ENCODE measurements at regions of chr4 and their contacts with region 1.

Region 1: DNA sequence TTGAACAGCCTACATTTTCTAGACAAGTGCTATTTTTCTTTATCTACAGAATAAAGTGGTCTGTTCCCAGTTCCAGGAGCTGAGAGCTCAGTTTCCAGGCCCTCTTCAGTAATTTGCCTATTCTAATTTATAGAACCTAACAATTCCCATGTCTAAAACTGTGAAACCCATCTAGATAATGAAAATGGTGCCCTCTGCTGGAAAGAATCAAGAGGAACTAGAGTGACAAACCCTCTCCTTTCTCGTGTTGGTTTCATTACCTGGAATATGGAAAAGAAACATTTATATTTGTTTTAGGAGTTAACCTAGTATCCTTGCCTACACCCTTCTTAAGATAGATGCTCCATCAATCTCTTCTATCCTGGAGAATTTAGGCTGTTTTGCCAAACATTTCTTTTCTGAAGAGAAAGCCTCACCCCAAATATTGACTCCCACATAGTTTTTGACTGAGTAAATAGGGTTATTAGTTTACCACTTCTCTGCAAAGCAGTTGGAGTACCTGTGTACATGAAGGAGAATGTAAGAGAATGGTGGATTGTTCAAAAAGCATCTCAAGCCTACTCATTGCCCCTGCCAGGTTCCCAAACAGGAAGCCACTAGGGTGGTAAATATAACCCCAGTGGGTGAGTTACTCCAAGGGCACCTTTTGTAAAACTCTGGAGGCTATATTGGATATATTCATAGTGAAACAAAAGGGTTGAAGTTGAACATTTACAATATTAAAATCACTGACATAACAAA is 121.6 kb downstream of the RASL11B start:
- DNase-seq: peak in 1 of 2 experiments; percentile 64
- H3K4me3 ChIP-seq: no peak overlapping the region
- H3K4me3 Mint-ChIP-seq: no peak overlapping the region
- H3K27ac Mint-ChIP-seq: no peak overlapping the region
- H3K4me1 ChIP-seq: peaks cover 7% of the 10 kb centered on the region
- H3K4me1 Mint-ChIP-seq: no peaks in the 10 kb centered on the region
- H3K27me3 ChIP-seq: no peaks in the 10 kb centered on the region
- H3K27me3 Mint-ChIP-seq: no peaks in the 10 kb centered on the region
- CTCF ChIP-seq: peak; percentile 58 to 66

Region 2: GRCh38 chr4:52234561-52235440 is 748.9 kb before region 1 on chr4:
- CTCF ChIA-PET with region 1: no interaction called
- POLR2A ChIA-PET with region 1: no interaction called
- intact Hi-C with region 1: loop called (anchors 1 kb)
- DNase-seq: peak in 1 of 2 experiments; percentile 34
- H3K4me3 ChIP-seq: no peak overlapping the region
- H3K4me3 Mint-ChIP-seq: no peak overlapping the region
- H3K27ac Mint-ChIP-seq: no peak overlapping the region
- H3K4me1 ChIP-seq: no peaks in the 10 kb centered on the region
- H3K4me1 Mint-ChIP-seq: no peaks in the 10 kb centered on the region
- H3K27me3 ChIP-seq: no peaks in the 10 kb centered on the region
- H3K27me3 Mint-ChIP-seq: peaks cover 8% of the 10 kb centered on the region
- CTCF ChIP-seq: peak; percentile 43 to 57

Region 3: DNA sequence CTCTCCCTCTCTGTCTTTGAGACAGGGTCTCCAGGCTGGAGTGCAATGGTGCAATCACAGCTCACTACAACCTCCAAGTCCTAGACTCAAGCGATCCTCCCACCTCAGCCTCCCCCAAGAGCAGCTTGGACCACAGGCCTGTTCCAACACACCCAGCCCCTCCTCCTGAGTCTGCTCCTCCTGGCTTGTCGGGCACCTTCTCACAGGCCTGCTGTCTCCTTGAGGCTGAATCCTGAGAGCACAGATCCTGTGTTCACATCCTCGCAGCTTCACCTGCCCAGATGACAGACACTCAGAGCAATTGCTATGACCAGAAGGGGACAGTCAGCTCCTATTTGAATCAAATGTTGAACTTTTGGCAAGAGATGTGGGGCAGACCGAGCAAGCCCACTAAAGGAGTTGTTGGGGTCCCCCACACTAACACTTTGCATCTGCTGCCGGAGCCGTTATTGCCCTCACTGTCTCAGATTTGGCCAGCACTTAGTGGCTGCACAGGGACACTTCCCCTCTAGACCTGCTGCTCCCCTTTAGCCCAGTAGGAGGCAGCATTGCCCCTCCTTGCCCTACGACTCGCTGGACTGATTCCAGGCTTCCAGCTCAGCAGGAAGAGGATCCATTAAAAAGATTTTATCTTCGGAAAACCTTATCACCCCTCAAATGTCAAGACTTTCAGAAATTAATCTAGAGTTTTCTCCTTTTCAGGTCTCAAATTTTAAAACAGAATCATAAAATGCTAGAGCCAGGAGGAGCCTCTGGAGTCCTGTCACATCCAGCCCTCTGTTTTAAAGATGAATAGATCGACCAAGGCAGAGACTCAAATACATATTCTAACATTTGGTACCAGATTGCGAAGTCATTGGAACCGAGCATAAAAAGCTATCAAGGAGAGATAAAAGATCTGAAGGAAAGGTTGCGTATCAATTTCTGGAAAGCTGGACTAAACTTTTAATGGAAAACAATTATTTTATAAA is 438.3 kb before region 1 on chr4:
- CTCF ChIA-PET with region 1: interaction called, 9 read pairs
- POLR2A ChIA-PET with region 1: no interaction called
- intact Hi-C with region 1: loop called (anchors 2 kb)
- DNase-seq: peak; percentile 49 to 74
- H3K4me3 ChIP-seq: no peak overlapping the region
- H3K4me3 Mint-ChIP-seq: no peak overlapping the region
- H3K27ac Mint-ChIP-seq: no peak overlapping the region
- H3K4me1 ChIP-seq: no peaks in the 10 kb centered on the region
- H3K4me1 Mint-ChIP-seq: no peaks in the 10 kb centered on the region
- H3K27me3 ChIP-seq: no peaks in the 10 kb centered on the region; the same call in none of the 2 replicates
- H3K27me3 Mint-ChIP-seq: no peaks in the 10 kb centered on the region
- CTCF ChIP-seq: peak; percentile 84

Region 4: GRCh38 chr4:52659001-52659721 is 324.6 kb before region 1 on chr4 and contains the start of gene USP46:
- CTCF ChIA-PET with region 1: no interaction called
- POLR2A ChIA-PET with region 1: no interaction called
- intact Hi-C with region 1: loop called (anchors 5 kb)
- DNase-seq: peak; percentile 69 to 79
- H3K4me3 ChIP-seq: peak within 1 kb of the TSS; percentile 77
- H3K4me3 Mint-ChIP-seq: peak within 1 kb of the TSS; percentile 84
- H3K27ac Mint-ChIP-seq: peak within 1 kb of the TSS; percentile 39
- H3K4me1 ChIP-seq: peaks cover 16% of the 10 kb centered on the region; the same call in 1 of the 2 replicates
- H3K4me1 Mint-ChIP-seq: peaks cover 36% of the 10 kb centered on the region
- H3K27me3 ChIP-seq: no peaks in the 10 kb centered on the region
- H3K27me3 Mint-ChIP-seq: no peaks in the 10 kb centered on the region
- CTCF ChIP-seq: no peak
- total RNA-seq, gene USP46: 26.4 and 32.2 TPM in 2 replicates

Region 5: DNA sequence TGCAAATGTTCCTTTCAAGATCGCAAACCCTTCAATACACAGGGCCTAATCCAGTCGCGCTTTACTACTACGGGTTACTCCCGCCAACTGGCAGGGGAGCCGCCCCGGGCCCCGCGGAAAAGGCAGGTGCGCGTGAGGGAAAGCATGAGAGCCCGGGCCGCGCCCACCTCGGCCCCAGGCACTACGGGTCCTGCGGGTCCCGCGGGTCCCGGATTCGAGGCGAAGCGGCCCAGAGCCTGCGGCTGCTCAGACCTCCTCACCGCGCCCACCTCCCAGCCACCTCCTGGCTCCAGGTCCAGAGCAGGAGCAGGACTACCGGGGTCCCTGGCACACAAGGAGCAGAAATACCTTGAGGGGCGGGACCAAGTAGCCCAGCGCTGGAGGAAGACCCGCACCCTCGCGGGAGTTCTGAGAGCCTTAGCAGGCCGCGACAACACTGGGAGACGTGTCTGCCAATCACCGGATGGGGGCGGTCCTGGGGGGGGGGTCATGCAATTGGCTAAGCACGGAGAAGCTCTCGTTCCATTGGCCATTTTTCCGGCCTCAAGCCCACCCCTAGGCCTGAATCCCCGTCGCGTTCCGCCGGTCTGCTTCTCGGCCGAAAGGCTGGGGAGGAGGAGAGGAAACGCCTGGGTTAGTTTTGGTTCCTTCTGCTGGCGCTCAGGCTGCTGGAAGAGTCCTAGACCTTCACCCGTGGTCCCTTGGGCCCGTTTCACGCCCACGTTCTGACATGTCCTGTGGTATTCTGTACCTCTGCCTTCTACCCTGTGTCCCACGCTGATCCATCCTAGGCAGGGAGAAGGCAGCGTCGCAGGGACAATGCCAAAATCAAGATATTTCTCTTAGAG is 261.5 kb before region 1 on chr4:
- CTCF ChIA-PET with region 1: interaction called, 8 read pairs
- POLR2A ChIA-PET with region 1: no interaction called
- intact Hi-C with region 1: loop called (anchors 2 kb)
- DNase-seq: peak; percentile 93 to 96
- H3K4me3 ChIP-seq: peak overlapping the region; percentile 55
- H3K4me3 Mint-ChIP-seq: peak overlapping the region; percentile 70
- H3K27ac Mint-ChIP-seq: peak overlapping the region; percentile 26
- H3K4me1 ChIP-seq: 0 out of 2 replicates have a peak, but pooled peaks cover 3% of the 10 kb centered on the region
- H3K4me1 Mint-ChIP-seq: peaks cover 7% of the 10 kb centered on the region
- H3K27me3 ChIP-seq: no peaks in the 10 kb centered on the region
- H3K27me3 Mint-ChIP-seq: no peaks in the 10 kb centered on the region
- CTCF ChIP-seq: no peak

Region 6: DNA sequence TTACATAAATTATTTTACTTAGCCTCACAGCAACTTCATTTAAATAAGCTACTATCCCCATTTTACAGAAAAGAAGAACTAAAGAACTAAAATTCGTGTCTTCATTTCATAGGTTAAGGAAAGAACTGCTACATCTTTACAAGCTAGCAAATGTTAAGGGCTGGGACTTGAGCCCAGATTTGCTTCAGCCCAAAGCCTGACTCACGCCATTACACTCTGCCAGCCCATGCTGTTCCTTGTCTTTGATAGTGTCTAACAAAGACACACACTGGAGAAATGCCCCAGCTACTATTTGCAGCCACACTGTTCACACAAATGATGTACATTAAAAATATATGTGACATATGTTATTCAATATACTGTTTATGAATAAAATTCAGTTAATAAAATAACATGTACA is 203.5 kb before region 1 on chr4:
- CTCF ChIA-PET with region 1: no interaction called
- POLR2A ChIA-PET with region 1: no interaction called
- intact Hi-C with region 1: loop called (anchors 10 kb)
- DNase-seq: no peak
- H3K4me3 ChIP-seq: no peak overlapping the region
- H3K4me3 Mint-ChIP-seq: no peak overlapping the region
- H3K27ac Mint-ChIP-seq: no peak overlapping the region
- H3K4me1 ChIP-seq: no peaks in the 10 kb centered on the region
- H3K4me1 Mint-ChIP-seq: no peaks in the 10 kb centered on the region
- H3K27me3 ChIP-seq: no peaks in the 10 kb centered on the region
- H3K27me3 Mint-ChIP-seq: peaks cover 2% of the 10 kb centered on the region
- CTCF ChIP-seq: no peak

Region 7: GRCh38 chr4:52853351-52853750 is 130.4 kb before region 1 on chr4:
- CTCF ChIA-PET with region 1: no interaction called
- POLR2A ChIA-PET with region 1: no interaction called
- intact Hi-C with region 1: no loop called
- DNase-seq: no peak
- H3K4me3 ChIP-seq: no peak overlapping the region
- H3K4me3 Mint-ChIP-seq: no peak overlapping the region
- H3K27ac Mint-ChIP-seq: no peak overlapping the region
- H3K4me1 ChIP-seq: peaks cover 36% of the 10 kb centered on the region
- H3K4me1 Mint-ChIP-seq: peaks cover 25% of the 10 kb centered on the region
- H3K27me3 ChIP-seq: no peaks in the 10 kb centered on the region
- H3K27me3 Mint-ChIP-seq: no peaks in the 10 kb centered on the region
- CTCF ChIP-seq: no peak

Region 8: GRCh38 chr4:52911684-52912294 is 71.9 kb before region 1 on chr4:
- CTCF ChIA-PET with region 1: no interaction called
- POLR2A ChIA-PET with region 1: no interaction called
- intact Hi-C with region 1: loop called (anchors 2 kb)
- DNase-seq: peak; percentile 80 to 82
- H3K4me3 ChIP-seq: no peak overlapping the region
- H3K4me3 Mint-ChIP-seq: no peak overlapping the region
- H3K27ac Mint-ChIP-seq: peak overlapping the region; percentile 39
- H3K4me1 ChIP-seq: peaks cover 58% of the 10 kb centered on the region
- H3K4me1 Mint-ChIP-seq: peaks cover 25% of the 10 kb centered on the region
- H3K27me3 ChIP-seq: no peaks in the 10 kb centered on the region
- H3K27me3 Mint-ChIP-seq: no peaks in the 10 kb centered on the region
- CTCF ChIP-seq: peak; percentile 52 to 67

Region 9: DNA sequence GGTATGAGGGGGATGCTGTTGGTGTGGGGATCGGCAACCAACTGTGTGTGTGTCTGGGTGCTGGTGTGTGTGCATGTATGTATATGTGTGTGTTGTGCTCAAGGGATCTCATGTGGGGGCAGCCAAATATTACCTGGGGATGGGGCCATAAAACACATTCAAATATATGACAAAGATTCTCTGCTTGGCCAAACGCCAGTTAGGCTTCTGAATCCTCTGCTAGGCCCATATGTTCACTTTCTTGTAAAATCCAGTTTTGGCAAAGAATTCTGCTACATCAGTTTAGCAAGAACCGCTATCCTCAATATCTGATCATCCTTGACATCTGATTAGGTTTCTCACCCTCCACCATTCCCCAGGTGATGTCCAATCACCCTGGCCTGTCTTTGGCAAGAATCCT is 15.0 kb before region 1 on chr4:
- CTCF ChIA-PET with region 1: no interaction called
- POLR2A ChIA-PET with region 1: no interaction called
- intact Hi-C with region 1: no loop called
- DNase-seq: no peak
- H3K4me3 ChIP-seq: no peak overlapping the region
- H3K4me3 Mint-ChIP-seq: no peak overlapping the region
- H3K27ac Mint-ChIP-seq: no peak overlapping the region
- H3K4me1 ChIP-seq: no peaks in the 10 kb centered on the region
- H3K4me1 Mint-ChIP-seq: peaks cover 6% of the 10 kb centered on the region
- H3K27me3 ChIP-seq: no peaks in the 10 kb centered on the region
- H3K27me3 Mint-ChIP-seq: no peaks in the 10 kb centered on the region
- CTCF ChIP-seq: no peak

Measured in Caco-2 (cell line).